Ovary (tissue), 10 donors: ENCODE measurements at regions of chr16 and their contacts with region 1.

Region 1: DNA sequence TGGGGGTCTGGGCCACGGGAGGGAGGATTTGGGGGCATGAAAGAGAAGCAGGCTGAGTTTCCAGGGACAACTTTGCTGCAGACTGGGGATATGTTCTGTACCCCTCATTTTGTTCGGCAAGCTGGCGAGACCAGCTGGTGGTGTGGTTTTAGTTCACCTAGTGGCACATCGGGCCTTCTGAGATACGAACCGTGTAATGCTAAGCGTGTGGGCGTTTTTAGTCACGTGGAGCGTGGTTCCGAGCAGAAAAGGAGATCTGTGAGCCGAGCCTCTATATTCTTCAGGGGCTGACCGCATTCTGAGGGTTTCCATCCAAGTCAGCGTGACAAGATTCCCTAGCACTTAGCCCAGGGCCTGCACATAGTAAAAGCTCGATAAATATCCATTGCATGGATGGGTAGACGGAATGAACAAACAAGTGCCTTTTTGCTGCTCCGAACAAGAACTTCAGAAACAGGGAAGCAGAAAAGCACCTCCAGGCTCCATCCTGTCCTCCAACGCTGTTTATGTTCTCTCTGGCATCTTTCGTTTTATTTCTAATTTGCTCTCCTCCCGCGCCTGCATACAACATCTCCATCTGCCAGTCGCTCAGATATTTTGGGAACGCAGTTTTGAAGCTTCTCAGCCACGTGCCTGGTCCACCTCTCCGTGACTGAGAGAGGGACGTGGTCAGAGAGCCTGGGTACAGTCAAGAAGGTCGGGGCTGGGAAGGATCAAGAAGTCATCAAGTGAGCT is 5.8 kb downstream of the SYT17 start:
- DNase-seq: no peak
- H3K4me3 ChIP-seq: no peak overlapping the region
- H3K27ac ChIP-seq: no peak overlapping the region
- H3K4me1 ChIP-seq: no peaks in the 10 kb centered on the region
- H3K27me3 ChIP-seq: no peaks in the 10 kb centered on the region
- CTCF ChIP-seq: no peak
- EP300 ChIP-seq: no peak
- POLR2A ChIP-seq: no peak

Region 2: GRCh38 chr16:19094541-19095365 is 79.1 kb before region 1 on chr16:
- intact Hi-C with region 1: loop called in 1 of 4 experiments (anchors 5 kb)
- DNase-seq: no peak
- H3K4me3 ChIP-seq: no peak overlapping the region
- H3K27ac ChIP-seq: no peak overlapping the region
- H3K4me1 ChIP-seq: no peaks in the 10 kb centered on the region
- H3K27me3 ChIP-seq: no peaks in the 10 kb centered on the region
- CTCF ChIP-seq: no peak
- EP300 ChIP-seq: no peak
- POLR2A ChIP-seq: no peak